ENCODE measurements at regions of chr6 and their contacts with region 1.

Region 1: DNA sequence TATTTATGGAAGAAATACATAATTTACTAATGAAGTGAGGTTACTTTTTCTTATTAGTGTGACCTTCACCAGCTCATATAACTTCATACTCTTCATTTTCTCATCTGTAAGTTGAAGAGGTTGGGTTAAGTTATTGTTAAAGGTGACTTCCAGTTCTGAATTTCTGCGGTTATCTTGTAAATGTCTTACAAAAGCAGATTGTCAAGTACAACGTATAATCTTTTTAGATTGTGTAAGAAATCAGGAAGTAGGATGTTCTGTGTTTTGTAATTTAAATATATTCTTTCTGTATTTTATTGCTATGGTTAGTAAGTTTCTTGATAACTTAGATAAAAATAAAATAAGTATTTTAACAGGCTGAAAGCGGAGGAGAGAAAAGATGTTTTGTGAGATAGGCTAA is 12.0 kb downstream of the WTAP start:
- DNase-seq: no peak
- H3K4me3 ChIP-seq: no peak overlapping the region
- H3K27ac ChIP-seq: peak overlapping the region in 1 of 2 experiments; percentile 39
- H3K4me1 ChIP-seq: peaks cover 0 to 2% (median 0%) of the 10 kb centered on the region in 4 experiments
- H3K27me3 ChIP-seq: no peaks in the 10 kb centered on the region

Region 2: GRCh38 chr6:159753081-159753872 is 13.9 kb after region 1 on chr6:
- CTCF ChIA-PET with region 1: interaction called, 10 read pairs
- POLR2A ChIA-PET with region 1: interaction called, 3 read pairs
- DNase-seq: no peak
- H3K4me3 ChIP-seq: no peak overlapping the region
- H3K27ac ChIP-seq: no peak overlapping the region
- H3K4me1 ChIP-seq: no peaks in the 10 kb centered on the region
- H3K27me3 ChIP-seq: no peaks in the 10 kb centered on the region

Region 3: DNA sequence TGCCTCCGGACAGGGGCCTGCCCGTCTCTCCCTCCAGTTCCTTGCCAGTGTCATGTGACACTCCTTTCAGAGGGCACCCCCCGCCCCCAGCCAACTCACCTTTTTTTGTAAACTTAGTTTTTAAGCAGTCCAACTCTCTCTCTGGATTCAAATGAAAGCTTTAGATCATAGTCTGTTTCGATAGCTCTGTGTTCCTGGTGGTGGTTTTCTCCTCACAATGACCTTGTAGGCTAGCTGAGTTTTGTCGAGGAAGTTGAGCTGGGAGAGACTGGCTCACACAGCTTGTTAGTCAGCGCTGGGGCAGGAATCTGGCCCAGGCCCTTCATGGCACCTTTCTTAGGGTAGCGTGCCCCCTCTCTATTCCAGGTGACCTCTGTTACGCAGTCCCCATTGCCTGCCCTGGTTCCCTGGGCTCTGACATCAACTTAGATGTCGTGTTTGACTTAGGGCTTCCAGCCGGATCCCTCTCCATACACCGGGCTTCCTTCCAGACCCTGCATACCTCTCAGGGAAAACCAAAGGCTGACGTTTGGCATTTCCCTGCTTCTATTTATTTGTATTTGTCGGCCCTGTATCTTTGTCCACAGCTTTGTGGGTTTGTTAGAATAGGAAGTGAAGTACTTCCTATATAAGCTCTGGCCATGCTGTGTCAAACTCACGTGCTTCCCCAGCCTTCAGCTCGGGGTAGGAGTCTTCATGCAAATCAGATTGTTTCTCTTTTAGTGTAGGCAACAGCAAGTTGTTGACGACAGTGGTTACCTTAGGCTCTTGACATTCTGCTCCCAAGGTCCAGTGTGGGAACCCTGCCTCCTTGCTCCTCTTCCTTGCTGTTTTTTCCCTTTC is 242.3 kb after region 1 on chr6:
- CTCF ChIA-PET with region 1: no interaction called
- POLR2A ChIA-PET with region 1: no interaction called
- DNase-seq: peak; percentile 89 to 95 (median 93)
- H3K4me3 ChIP-seq: peak overlapping the region in 2 of 7 experiments; percentile 36 to 40
- H3K27ac ChIP-seq: no peak overlapping the region
- H3K4me1 ChIP-seq: peaks cover 27 to 44% (median 36%) of the 10 kb centered on the region in 4 experiments
- H3K27me3 ChIP-seq: peaks cover 0 to 79% (median 51%) of the 10 kb centered on the region in 5 experiments

Measured in common myeloid progenitor, CD34-positive (primary cell).